ENCODE measurements at regions of chr14 and their contacts with region 1.

Region 1: DNA sequence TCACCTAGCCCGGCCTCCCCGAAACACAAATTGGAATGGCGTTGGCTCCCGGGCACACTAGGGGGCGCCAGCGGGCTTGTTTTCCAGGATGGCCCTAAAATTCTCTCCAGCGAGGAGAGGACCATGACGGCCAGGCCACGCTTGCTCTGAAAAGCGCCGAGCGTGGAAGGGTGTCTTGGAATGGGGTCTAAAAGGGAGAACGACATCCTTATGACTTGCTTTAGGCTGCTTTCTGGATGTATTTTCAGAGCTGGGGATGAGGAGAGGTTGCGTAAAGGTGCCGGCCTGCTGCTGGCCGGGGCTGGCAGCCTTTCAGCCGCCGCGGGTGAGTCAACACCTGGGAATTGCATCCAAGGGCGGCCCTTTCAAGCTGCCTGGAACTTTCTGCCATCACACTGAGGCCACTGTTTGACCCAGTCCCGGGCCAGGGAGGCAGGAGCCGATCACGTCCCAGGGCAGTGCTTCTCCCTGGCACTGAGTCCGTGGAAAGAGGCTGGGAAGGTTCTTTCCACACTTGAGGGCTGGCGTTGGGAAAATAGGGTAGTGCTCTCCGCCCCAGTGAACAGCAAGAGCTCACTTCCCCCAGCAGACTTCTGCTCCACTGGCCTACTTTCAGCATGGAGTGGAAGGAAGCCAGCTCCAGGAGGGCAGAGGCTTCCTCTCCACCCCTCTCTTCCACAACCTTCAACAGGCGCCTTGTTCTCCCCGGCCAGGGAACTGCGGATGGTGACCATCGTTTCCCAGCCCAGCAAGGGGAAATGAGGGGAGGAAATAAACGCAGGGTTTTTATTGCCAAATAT is 216.2 kb downstream of the TTC8 start:
- DNase-seq: peak; percentile 76
- ATAC-seq: peak; percentile 71
- H3K4me3 Mint-ChIP-seq: peak overlapping the region; percentile 81
- H3K27ac Mint-ChIP-seq: no peak overlapping the region
- H3K4me1 Mint-ChIP-seq: peaks cover 14% of the 10 kb centered on the region
- H3K27me3 Mint-ChIP-seq: peaks cover 34% of the 10 kb centered on the region
- CTCF ChIP-seq: peak; percentile 95

Region 2: GRCh38 chr14:89165189-89166181 is 124.8 kb after region 1 on chr14:
- CTCF ChIA-PET with region 1: interaction called, 3 read pairs
- POLR2A ChIA-PET with region 1: no interaction called
- intact Hi-C with region 1: loop called (anchors 5 kb)
- DNase-seq: no peak
- ATAC-seq: peak; percentile 66
- H3K4me3 Mint-ChIP-seq: peak overlapping the region; percentile 83
- H3K27ac Mint-ChIP-seq: peak overlapping the region; percentile 90
- H3K4me1 Mint-ChIP-seq: peaks cover 36% of the 10 kb centered on the region
- H3K27me3 Mint-ChIP-seq: no peaks in the 10 kb centered on the region
- CTCF ChIP-seq: no peak

Region 3: GRCh38 chr14:89330236-89331002 is 289.8 kb after region 1 on chr14:
- CTCF ChIA-PET with region 1: no interaction called
- POLR2A ChIA-PET with region 1: no interaction called
- intact Hi-C with region 1: loop called (anchors 10 kb)
- DNase-seq: no peak
- ATAC-seq: no peak
- H3K4me3 Mint-ChIP-seq: peak overlapping the region; percentile 5
- H3K27ac Mint-ChIP-seq: peak overlapping the region; percentile 79
- H3K4me1 Mint-ChIP-seq: peaks cover 60% of the 10 kb centered on the region
- H3K27me3 Mint-ChIP-seq: no peaks in the 10 kb centered on the region
- CTCF ChIP-seq: no peak

Region 4: DNA sequence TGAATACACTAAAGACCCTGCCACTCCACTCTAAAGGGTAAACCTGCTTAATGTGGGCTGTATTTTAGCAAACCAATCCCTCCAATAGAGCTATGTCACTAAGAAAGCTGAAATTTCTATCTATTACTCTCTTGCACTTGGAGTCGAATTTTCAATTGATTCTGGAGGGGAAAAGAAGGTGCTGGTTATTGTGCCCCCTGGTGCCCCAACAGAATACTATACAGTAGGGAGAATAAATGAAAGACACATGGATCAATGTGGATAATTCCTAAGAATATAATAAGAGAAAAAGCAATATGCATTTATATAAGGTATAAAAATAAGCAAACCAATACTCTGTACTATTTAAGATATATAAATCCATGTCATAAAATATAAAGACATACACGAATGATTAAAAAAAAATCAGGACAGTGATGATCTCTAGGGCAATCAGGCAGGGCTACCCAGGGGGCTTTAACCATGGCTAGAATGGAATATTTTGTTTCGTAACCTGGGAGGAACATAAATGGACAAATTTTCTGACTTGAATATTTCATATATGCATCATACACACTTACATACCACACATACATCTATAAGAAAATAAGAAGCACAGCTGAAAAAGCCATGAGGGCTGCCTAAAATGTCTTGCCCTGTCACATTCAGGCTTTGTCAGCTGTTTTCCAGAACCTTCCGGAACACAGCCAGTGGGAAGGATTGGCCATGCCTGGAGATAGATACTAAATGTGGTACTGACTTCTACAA is 859.4 kb after region 1 on chr14:
- CTCF ChIA-PET with region 1: interaction called, 12 read pairs
- POLR2A ChIA-PET with region 1: no interaction called
- intact Hi-C with region 1: loop called (anchors 1 kb)
- DNase-seq: no peak
- ATAC-seq: peak; percentile 31
- H3K4me3 Mint-ChIP-seq: no peak overlapping the region
- H3K27ac Mint-ChIP-seq: no peak overlapping the region
- H3K4me1 Mint-ChIP-seq: peaks cover 3% of the 10 kb centered on the region
- H3K27me3 Mint-ChIP-seq: no peaks in the 10 kb centered on the region
- CTCF ChIP-seq: no peak

Region 5: GRCh38 chr14:89915114-89915878 is 874.6 kb after region 1 on chr14:
- CTCF ChIA-PET with region 1: interaction called, 13 read pairs
- POLR2A ChIA-PET with region 1: no interaction called
- intact Hi-C with region 1: loop called (anchors 1 kb)
- DNase-seq: peak; percentile 19
- ATAC-seq: peak; percentile 54
- H3K4me3 Mint-ChIP-seq: no peak overlapping the region
- H3K27ac Mint-ChIP-seq: no peak overlapping the region
- H3K4me1 Mint-ChIP-seq: peaks cover 3% of the 10 kb centered on the region
- H3K27me3 Mint-ChIP-seq: no peaks in the 10 kb centered on the region
- CTCF ChIP-seq: peak; percentile 94

Measured in activated B cell treated with CpG ODN at 0.5 μM for 24 hours (primary cell).